GM18951 (cell line): ENCODE measurements at regions of chr4 and their contacts with region 1.

Region 1: GRCh38 chr4:107913281-107913899 is 18.0 kb upstream of the CYP2U1 start:
- POLR2A ChIP-seq: no peak

Region 2: DNA sequence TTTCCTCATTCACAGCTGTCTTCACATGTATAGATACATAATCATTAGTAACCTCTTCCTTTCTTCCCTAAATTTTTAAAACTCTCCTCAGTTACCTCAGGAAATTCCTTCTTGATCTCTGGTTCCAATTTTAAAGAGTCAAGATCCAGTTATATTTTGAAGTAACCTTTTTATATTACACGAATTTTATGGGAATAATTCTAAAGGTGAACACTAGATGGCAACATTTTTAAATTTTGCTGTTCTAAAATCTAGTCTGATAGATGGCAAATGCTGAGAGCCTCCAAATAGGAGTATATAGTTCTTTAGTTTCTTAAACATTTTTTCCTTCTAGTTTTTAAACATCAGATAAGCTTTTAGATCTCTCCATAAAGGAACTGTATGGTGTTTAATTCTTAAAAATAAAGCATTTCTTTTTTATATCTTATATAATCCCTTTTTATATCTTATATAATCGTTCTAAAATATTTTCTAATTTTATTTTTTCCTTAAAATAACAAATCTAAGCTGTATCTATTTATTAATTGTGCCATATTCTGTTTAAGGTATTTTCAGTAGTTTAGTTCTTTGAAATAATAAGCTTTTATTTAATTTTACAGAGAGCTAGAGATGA is 155.4 kb before region 1 on chr4:
- in situ Hi-C with region 1: loop called (anchors 10 kb)
- POLR2A ChIP-seq: no peak

Region 3: DNA sequence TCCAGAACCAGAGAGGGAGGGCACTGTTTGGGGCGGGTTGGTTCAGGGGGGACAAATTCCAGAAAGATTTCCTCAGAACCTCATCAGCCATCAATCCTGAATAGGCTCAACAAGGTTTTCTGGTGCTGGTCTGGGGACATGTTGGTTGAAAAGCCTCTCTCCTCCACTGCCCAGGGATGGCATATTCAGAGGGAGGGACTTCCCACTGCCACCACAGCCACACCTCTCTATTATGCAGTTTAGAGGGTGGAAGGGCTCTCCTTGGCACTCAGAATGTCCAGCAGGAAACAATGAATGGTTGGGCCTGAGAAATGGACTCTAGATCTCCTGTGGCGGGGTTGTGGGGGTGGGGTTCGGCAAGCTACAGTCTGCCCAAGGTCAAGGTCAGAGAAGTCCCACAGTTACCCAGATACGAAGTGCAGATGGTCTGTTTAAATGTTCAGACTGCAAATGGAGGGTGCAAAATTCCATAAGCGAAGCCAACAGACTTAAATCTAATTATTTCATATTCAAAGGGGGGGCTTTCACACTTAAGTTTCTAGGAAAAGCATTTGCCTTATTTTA is 184.7 kb after region 1 on chr4:
- in situ Hi-C with region 1: no loop called
- POLR2A ChIP-seq: no peak